B cell (primary cell): ENCODE measurements at regions of chr11 and their contacts with region 1.

Region 1: DNA sequence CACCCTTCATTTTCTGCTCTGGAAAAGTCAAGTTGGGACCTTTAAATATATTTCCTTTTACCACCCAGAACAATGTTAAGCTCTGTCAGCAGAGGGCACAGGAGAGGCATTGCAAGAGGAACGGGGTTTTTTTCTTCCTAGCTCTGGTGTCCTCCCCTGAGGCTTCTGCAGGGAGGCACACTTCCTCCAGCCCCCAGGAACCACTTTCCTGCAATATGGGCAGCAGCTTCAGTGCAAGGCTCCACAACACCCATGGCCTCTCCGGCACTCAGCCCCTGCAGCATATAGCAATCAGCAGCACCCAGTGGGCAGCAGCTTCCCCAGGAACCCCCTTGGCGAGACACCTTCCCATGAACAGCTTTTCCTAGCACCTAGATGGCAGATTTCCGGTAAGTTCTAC is 101.4 kb downstream of the SYT9 start:
- DNase-seq: peak; percentile 50
- ATAC-seq: peak; percentile 53
- H3K4me3 ChIP-seq: no peak overlapping the region
- H3K4me3 Mint-ChIP-seq: no peak overlapping the region
- H3K27ac ChIP-seq: no peak overlapping the region
- H3K27ac Mint-ChIP-seq: no peak overlapping the region
- H3K4me1 ChIP-seq: peaks cover 0 to 3% of the 10 kb centered on the region in 2 donors
- H3K4me1 Mint-ChIP-seq: peaks cover 2% of the 10 kb centered on the region
- H3K27me3 ChIP-seq: peaks cover 0 to 4% (median under 1%) of the 10 kb centered on the region in 4 experiments
- H3K27me3 Mint-ChIP-seq: peaks cover 11% of the 10 kb centered on the region
- CTCF ChIP-seq: peak; percentile 63

Region 2: GRCh38 chr11:7098235-7098832 is 254.8 kb before region 1 on chr11:
- CTCF ChIA-PET with region 1: no interaction called
- POLR2A ChIA-PET with region 1: no interaction called
- intact Hi-C with region 1: loop called (anchors 5 kb)
- DNase-seq: peak; percentile 72
- ATAC-seq: peak; percentile 73
- H3K4me3 ChIP-seq: no peak overlapping the region
- H3K4me3 Mint-ChIP-seq: no peak overlapping the region
- H3K27ac ChIP-seq: no peak overlapping the region
- H3K27ac Mint-ChIP-seq: no peak overlapping the region
- H3K4me1 ChIP-seq: no peaks in the 10 kb centered on the region
- H3K4me1 Mint-ChIP-seq: no peaks in the 10 kb centered on the region
- H3K27me3 ChIP-seq: peaks cover 0 to 3% (median 0%) of the 10 kb centered on the region in 4 experiments
- H3K27me3 Mint-ChIP-seq: peaks cover 24% of the 10 kb centered on the region
- CTCF ChIP-seq: peak; percentile 86

Region 3: GRCh38 chr11:7442588-7443215 is 89.6 kb after region 1 on chr11:
- CTCF ChIA-PET with region 1: interaction called, 104 read pairs
- POLR2A ChIA-PET with region 1: no interaction called
- intact Hi-C with region 1: loop called (anchors 1 kb)
- DNase-seq: peak; percentile 76
- ATAC-seq: peak; percentile 96
- H3K4me3 ChIP-seq: no peak overlapping the region
- H3K4me3 Mint-ChIP-seq: no peak overlapping the region
- H3K27ac ChIP-seq: no peak overlapping the region
- H3K27ac Mint-ChIP-seq: no peak overlapping the region
- H3K4me1 ChIP-seq: no peaks in the 10 kb centered on the region
- H3K4me1 Mint-ChIP-seq: peaks cover 2% of the 10 kb centered on the region
- H3K27me3 ChIP-seq: no peaks in the 10 kb centered on the region
- H3K27me3 Mint-ChIP-seq: no peaks in the 10 kb centered on the region
- CTCF ChIP-seq: peak; percentile 94

Region 4: GRCh38 chr11:7548659-7549274 is 195.7 kb after region 1 on chr11:
- CTCF ChIA-PET with region 1: interaction called, 6 read pairs
- POLR2A ChIA-PET with region 1: no interaction called
- intact Hi-C with region 1: loop called (anchors 1 kb)
- DNase-seq: peak; percentile 48
- ATAC-seq: peak; percentile 88
- H3K4me3 ChIP-seq: no peak overlapping the region
- H3K4me3 Mint-ChIP-seq: no peak overlapping the region
- H3K27ac ChIP-seq: no peak overlapping the region
- H3K27ac Mint-ChIP-seq: peak overlapping the region; percentile 15
- H3K4me1 ChIP-seq: no peaks in the 10 kb centered on the region
- H3K4me1 Mint-ChIP-seq: peaks cover 22% of the 10 kb centered on the region
- H3K27me3 ChIP-seq: no peaks in the 10 kb centered on the region
- H3K27me3 Mint-ChIP-seq: no peaks in the 10 kb centered on the region
- CTCF ChIP-seq: peak; percentile 49

Region 5: GRCh38 chr11:7665473-7666291 is 312.6 kb after region 1 on chr11:
- CTCF ChIA-PET with region 1: interaction called, 53 read pairs
- POLR2A ChIA-PET with region 1: no interaction called
- intact Hi-C with region 1: loop called (anchors 1 kb)
- DNase-seq: peak; percentile 81
- ATAC-seq: peak; percentile 100
- H3K4me3 ChIP-seq: no peak overlapping the region
- H3K4me3 Mint-ChIP-seq: no peak overlapping the region
- H3K27ac ChIP-seq: no peak overlapping the region
- H3K27ac Mint-ChIP-seq: no peak overlapping the region
- H3K4me1 ChIP-seq: peaks cover 0 to 8% of the 10 kb centered on the region in 2 donors
- H3K4me1 Mint-ChIP-seq: peaks cover 4% of the 10 kb centered on the region
- H3K27me3 ChIP-seq: no peaks in the 10 kb centered on the region
- H3K27me3 Mint-ChIP-seq: no peaks in the 10 kb centered on the region
- CTCF ChIP-seq: peak; percentile 94